ENCODE measurements at regions of chr4 and their contacts with region 1.

Region 1: DNA sequence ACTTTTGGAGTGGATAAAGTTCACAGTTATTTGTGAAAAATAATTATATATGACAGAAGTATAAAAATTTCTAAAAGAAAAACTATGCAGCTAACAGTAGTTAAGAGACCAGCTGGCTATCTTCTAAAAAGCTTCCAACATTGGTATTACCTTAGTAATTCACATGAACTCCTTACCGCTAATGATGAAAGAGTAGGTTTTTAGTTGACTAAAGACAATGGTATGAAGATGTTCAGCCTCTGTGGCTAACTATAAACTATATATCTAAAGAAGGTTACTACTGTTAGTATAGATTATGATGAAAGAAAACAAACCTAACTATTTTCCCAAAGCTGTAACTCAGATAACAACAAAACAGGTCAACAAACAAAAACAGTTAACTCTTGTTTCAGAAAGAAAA is 10.4 kb downstream of the CCNI start:
- DNase-seq: no peak
- ATAC-seq: no peak
- H3K4me3 ChIP-seq: no peak overlapping the region
- H3K4me3 Mint-ChIP-seq: no peak overlapping the region
- H3K27ac ChIP-seq: no peak overlapping the region
- H3K27ac Mint-ChIP-seq: peak overlapping the region; percentile 22
- H3K4me1 ChIP-seq: peaks cover 16% of the 10 kb centered on the region
- H3K4me1 Mint-ChIP-seq: peaks cover 45% of the 10 kb centered on the region
- H3K27me3 ChIP-seq: no peaks in the 10 kb centered on the region
- H3K27me3 Mint-ChIP-seq: no peaks in the 10 kb centered on the region
- CTCF ChIP-seq: no peak

Region 2: DNA sequence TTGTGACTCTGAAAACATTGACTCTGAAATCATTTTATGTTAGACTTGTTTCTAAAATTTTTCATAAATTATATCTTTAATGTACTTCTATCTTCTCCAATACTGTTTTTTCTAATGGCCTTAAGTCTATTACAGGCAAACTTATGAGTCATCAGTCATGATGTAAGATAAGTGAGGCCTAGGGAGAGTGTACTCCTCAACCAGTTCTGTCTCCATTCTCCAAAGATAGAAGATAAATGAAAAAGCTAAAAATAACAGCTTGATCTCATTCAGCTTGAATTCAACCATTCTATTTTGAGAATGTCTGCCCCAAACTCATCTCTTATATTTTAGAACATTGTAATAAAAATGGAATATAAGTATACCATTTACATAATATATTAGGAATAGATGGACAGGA is 724.3 kb before region 1 on chr4:
- CTCF ChIA-PET with region 1: no interaction called
- POLR2A ChIA-PET with region 1: no interaction called
- intact Hi-C with region 1: no loop called
- DNase-seq: no peak
- ATAC-seq: no peak
- H3K4me3 ChIP-seq: no peak overlapping the region
- H3K4me3 Mint-ChIP-seq: no peak overlapping the region
- H3K27ac ChIP-seq: no peak overlapping the region
- H3K27ac Mint-ChIP-seq: no peak overlapping the region
- H3K4me1 ChIP-seq: no peaks in the 10 kb centered on the region
- H3K4me1 Mint-ChIP-seq: no peaks in the 10 kb centered on the region
- H3K27me3 ChIP-seq: no peaks in the 10 kb centered on the region
- H3K27me3 Mint-ChIP-seq: peaks cover 8% of the 10 kb centered on the region
- CTCF ChIP-seq: no peak

Region 3: DNA sequence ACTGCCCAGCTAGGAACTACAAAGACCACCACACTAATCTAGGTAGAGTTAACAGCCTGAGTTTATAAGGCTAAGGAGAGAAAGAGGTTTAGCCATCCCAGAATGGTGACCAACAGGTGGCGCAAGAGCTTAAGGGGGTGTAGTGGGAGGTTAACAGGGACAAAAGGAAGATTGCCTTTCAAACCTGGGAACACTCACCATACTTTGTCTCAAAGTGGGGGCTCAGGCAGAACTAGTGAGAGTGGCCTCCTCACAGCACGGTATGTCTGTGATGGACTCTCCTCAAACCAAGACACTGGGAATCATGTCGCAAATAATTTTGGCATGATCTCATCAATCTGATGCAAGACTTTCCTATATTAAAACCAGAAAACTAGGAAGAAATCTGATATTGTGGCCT is 13.0 kb before region 1 on chr4:
- CTCF ChIA-PET with region 1: interaction called, 14 read pairs
- POLR2A ChIA-PET with region 1: interaction called, 4 read pairs
- intact Hi-C with region 1: no loop called
- DNase-seq: peak; percentile 30 to 75 (median 69)
- ATAC-seq: peak; percentile 52
- H3K4me3 ChIP-seq: no peak overlapping the region
- H3K4me3 Mint-ChIP-seq: no peak overlapping the region
- H3K27ac ChIP-seq: no peak overlapping the region
- H3K27ac Mint-ChIP-seq: no peak overlapping the region
- H3K4me1 ChIP-seq: no peaks in the 10 kb centered on the region
- H3K4me1 Mint-ChIP-seq: peaks cover 7% of the 10 kb centered on the region
- H3K27me3 ChIP-seq: no peaks in the 10 kb centered on the region
- H3K27me3 Mint-ChIP-seq: no peaks in the 10 kb centered on the region
- CTCF ChIP-seq: peak; percentile 45